Activated naive CD4-positive, alpha-beta T cell treated with anti-CD3 and anti-CD28 coated beads for 36 hours (primary cell): ENCODE measurements at regions of chr2 and their contacts with region 1.

Region 1: GRCh38 chr2:113105047-113105785 is 22.2 kb upstream of the IL1RN start:
- DNase-seq: peak; percentile 70
- H3K4me3 Mint-ChIP-seq: no peak overlapping the region
- H3K27ac Mint-ChIP-seq: peak overlapping the region; percentile 88
- H3K4me1 Mint-ChIP-seq: peaks cover 25% of the 10 kb centered on the region
- H3K27me3 Mint-ChIP-seq: peaks cover 2% of the 10 kb centered on the region

Region 2: DNA sequence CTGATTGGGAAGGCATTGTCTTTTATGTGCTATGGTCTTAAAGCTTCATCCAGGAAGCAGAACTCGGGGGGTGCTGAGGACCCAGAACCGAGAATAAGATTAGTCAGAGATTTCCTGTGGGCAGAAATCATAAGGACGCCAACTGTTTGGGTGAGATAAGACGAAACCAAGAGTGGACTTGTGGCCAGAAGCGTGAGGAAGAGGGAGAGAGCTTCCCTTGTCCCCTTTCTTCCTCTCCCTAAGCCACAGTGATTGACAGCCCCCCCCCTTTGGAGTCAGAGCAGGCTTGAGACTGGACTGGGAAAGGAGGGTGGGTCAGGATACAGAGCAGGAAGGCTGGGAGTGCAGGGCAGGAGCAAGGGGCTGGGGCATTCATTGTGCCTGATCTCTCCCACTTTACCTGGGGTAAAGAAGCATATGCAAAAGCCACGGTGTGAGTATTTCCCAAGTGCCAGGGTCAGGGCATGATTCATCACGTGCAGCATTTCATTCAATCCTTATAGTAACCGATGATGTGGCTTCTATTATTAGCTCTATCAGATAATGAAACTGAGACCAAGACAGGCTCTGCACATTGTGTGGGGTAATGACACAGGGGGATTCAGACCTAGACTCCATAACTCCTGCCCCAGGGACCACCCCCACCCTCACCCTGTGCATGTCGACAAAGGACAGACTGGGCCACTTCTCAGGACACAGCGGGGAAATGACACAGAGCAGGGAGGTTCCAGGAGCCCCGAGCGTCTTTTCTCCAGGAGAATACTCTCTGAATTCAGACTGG is 19.2 kb after region 1 on chr2:
- CTCF ChIA-PET with region 1: interaction called, 3 read pairs
- intact Hi-C with region 1: loop called (anchors 2 kb)
- DNase-seq: peak; percentile 40
- H3K4me3 Mint-ChIP-seq: no peak overlapping the region
- H3K27ac Mint-ChIP-seq: no peak overlapping the region
- H3K4me1 Mint-ChIP-seq: peaks cover 23% of the 10 kb centered on the region
- H3K27me3 Mint-ChIP-seq: no peaks in the 10 kb centered on the region